ENCODE measurements at regions of chr17 and their contacts with region 1.

Region 1: DNA sequence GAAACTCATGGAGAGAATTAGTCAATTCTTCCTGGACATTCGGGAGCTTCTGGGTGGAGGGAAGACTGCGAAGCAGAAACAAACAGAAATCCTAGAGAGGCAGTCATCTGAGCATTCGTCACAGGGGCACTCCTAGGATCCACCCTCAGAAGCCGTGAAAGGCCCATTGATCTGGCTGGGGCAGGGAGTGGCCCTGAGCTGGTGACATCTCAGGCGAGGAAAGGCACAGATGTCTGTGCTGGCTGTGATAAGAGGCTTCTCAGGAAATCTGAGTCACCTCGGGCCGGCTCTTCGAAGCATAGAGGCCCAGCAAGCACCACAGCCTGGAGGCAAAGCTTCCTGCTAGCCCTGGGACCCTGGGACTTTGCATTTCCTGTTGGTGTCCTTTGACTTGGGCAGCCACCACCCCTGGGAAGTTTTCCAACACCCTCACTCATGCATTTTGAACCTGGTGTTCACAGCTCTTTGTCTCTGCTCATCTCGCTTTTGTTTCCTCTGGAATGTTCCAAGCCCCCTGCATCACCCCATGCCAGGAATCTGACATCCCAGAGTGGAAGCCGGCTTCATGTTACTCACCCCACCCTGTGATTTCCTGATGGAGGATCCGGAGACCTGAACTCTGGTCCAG is 23.3 kb upstream of the CDRT4 start:
- DNase-seq: peak; percentile 50 to 86 (median 78)
- ATAC-seq: peak; percentile 81 to 96 (median 95)
- H3K4me3 ChIP-seq: no peak overlapping the region
- H3K27ac ChIP-seq: peak overlapping the region; percentile 51 to 89 (median 70)
- H3K4me1 ChIP-seq: peaks cover 0 to 18% (median 10%) of the 10 kb centered on the region in 12 donors
- H3K27me3 ChIP-seq: no peaks in the 10 kb centered on the region
- CTCF ChIP-seq: no peak
- POLR2A ChIP-seq: no peak

Region 2: GRCh38 chr17:14748031-14748710 is 742.6 kb before region 1 on chr17:
- intact Hi-C with region 1: no loop called
- DNase-seq: no peak
- ATAC-seq: peak in 1 of 4 donors; percentile 66
- H3K4me3 ChIP-seq: no peak overlapping the region
- H3K27ac ChIP-seq: no peak overlapping the region
- H3K4me1 ChIP-seq: peaks cover 0 to 21% (median 0%) of the 10 kb centered on the region in 12 donors
- H3K27me3 ChIP-seq: no peaks in the 10 kb centered on the region
- CTCF ChIP-seq: no peak
- POLR2A ChIP-seq: no peak

Region 3: DNA sequence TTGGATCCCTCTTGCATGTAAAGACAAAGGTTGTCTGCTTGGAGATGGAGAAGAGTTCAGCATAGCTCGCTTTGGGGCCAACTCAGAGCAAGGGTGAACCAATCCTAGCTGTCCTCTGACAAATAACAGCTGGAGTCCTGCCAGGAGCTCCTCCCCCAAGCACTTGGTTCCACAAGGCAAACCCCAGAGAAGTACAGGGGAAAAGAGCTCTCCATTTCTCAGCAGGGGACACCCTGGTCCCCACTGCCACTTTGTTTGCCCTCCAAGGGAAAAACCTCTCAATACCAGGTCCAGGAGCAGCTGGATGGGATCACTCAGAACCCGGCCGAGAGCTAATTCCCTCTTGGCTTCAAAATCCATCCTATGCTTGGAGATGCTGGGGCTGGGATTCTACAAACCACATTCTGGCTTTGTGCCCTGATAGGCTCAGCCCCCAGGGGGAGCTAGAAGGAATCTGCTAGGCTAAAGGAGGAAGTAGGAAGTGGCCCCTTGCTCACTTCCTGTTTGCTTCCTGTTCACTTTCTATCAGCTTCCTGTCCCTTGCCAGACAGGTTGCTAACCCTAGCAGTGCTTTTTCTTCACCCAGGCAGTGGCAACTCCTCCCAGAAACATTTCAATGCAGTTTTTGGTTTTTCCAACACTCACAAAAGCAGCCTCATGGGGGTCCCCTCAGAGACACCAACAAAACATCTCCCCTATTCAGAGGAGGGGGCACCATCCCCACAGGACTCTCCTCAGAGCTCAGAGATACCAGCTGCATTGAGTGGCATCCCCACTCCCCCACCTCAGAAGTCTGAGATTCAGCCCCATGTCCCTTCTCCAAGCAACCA is 54.1 kb before region 1 on chr17:
- intact Hi-C with region 1: loop called in 2 of 10 experiments (anchors 5 to 10 kb)
- DNase-seq: peak; percentile 71 to 91 (median 76)
- ATAC-seq: peak; percentile 58 to 66 (median 62)
- H3K4me3 ChIP-seq: no peak overlapping the region
- H3K27ac ChIP-seq: peak overlapping the region; percentile 11 to 85 (median 75)
- H3K4me1 ChIP-seq: peaks cover 7 to 58% (median 23%) of the 10 kb centered on the region in 12 donors
- H3K27me3 ChIP-seq: no peaks in the 10 kb centered on the region
- CTCF ChIP-seq: peak in 11 of 12 donors; percentile 19 to 54 (median 46)
- POLR2A ChIP-seq: peak in 1 of 2 donors; percentile 24

Region 4: DNA sequence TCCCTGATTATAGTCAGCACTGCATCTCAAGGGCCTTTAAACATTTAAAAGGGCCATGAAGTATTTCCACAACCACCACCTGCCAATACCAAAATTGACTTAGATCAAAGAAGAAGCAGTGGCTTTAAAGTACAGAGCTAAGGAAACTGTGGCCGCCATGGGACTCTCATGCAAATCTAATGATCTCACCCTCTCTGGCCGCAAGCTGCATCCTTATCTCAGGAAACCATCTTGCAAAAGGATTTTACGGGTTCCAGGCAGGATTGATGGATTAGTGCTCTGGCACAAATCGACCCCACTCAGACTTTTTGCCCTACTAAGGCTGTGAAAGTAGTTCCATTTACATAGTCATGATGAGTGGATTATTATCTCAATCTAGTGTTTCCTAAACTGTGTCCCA is 45.9 kb before region 1 on chr17:
- intact Hi-C with region 1: loop called in 2 of 10 experiments (anchors 2 to 5 kb)
- DNase-seq: no peak
- ATAC-seq: peak in 1 of 4 donors; percentile 48
- H3K4me3 ChIP-seq: no peak overlapping the region
- H3K27ac ChIP-seq: no peak overlapping the region
- H3K4me1 ChIP-seq: peaks cover 0 to 43% (median 25%) of the 10 kb centered on the region in 12 donors
- H3K27me3 ChIP-seq: no peaks in the 10 kb centered on the region
- CTCF ChIP-seq: no peak
- POLR2A ChIP-seq: no peak

Region 5: GRCh38 chr17:15469260-15469659 is 21.5 kb before region 1 on chr17:
- intact Hi-C with region 1: no loop called
- DNase-seq: peak; percentile 53 to 75 (median 72)
- ATAC-seq: peak; percentile 35 to 84 (median 64)
- H3K4me3 ChIP-seq: no peak overlapping the region
- H3K27ac ChIP-seq: no peak overlapping the region
- H3K4me1 ChIP-seq: peaks cover 0 to 24% (median 4%) of the 10 kb centered on the region in 12 donors
- H3K27me3 ChIP-seq: no peaks in the 10 kb centered on the region
- CTCF ChIP-seq: no peak
- POLR2A ChIP-seq: no peak

Region 6: DNA sequence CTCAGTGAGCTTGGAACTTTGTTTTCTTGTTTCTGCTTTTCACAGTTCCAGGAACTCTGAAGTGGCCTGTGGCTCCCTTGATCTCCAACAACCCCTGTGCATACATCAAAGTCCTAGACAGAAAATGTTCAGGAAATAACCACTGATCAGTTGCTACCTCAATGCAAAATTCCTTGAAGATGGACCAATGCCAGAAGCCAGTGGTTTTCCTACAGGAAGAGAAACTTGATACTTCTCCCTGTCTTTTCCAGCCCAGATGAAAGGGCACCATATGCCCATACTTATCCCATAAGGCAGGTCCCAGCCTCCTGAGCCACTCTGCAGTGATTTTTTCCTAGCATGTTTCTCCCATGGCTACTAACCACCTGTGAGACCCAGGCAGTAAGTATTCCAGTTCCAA is 11.0 kb before region 1 on chr17:
- intact Hi-C with region 1: no loop called
- DNase-seq: no peak
- ATAC-seq: no peak
- H3K4me3 ChIP-seq: no peak overlapping the region
- H3K27ac ChIP-seq: no peak overlapping the region
- H3K4me1 ChIP-seq: peaks cover 0 to 20% (median 6%) of the 10 kb centered on the region in 12 donors
- H3K27me3 ChIP-seq: no peaks in the 10 kb centered on the region
- CTCF ChIP-seq: no peak
- POLR2A ChIP-seq: no peak